OCI-LY7 (cell line): ENCODE measurements at regions of chr5 and their contacts with region 1.

Region 1: DNA sequence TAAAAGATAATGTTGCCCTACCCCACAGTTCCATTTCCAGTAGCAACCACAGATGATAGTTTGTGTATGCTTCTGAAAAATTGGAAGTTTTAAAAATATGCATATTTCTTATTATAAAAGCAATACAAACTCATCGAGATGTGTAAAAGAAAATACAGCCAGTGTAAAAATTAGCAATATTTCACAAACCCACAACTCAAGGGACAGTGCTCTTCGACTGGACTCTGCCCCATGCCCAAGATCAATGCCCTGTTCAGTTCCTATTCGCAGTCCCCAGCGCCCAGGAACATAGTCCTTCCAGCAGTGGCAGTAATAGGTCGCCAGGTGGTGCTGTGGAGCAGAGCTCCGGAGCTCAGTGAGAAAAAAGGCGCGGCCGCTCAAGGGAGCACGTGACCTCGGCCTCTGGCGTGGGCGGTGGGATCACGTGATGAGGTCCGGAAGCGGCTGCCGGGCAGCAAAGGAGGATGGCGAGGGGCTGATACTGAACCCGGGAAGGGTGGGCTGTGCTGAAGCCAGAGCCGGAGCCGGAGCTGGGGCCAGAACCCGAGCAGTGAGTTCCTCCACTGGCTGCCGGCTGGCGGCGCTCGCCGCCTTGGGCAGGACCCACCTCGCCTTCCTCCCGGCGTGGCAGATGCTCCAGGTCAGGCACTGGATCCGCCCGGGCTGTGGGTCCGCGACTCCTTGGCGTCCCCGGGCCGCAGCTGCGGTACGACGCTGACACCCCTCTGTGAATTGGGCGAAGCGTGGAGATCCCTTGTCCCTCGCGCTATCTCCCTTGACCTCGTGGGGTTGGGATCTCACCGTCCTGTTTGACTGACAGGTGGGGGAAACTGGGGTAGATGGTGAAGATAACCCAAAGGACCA is at the start of gene SLC36A1:
- DNase-seq: peak; percentile 96
- H3K4me3 ChIP-seq: peak within 1 kb of the TSS; percentile 86
- H3K27ac ChIP-seq: no peak within 1 kb of the TSS
- H3K4me1 ChIP-seq: peaks cover 7% of the 10 kb centered on the region
- CTCF ChIP-seq: peak; percentile 94
- total RNA-seq, gene SLC36A1: 6.7 and 11.6 TPM in 2 replicates

Region 2: DNA sequence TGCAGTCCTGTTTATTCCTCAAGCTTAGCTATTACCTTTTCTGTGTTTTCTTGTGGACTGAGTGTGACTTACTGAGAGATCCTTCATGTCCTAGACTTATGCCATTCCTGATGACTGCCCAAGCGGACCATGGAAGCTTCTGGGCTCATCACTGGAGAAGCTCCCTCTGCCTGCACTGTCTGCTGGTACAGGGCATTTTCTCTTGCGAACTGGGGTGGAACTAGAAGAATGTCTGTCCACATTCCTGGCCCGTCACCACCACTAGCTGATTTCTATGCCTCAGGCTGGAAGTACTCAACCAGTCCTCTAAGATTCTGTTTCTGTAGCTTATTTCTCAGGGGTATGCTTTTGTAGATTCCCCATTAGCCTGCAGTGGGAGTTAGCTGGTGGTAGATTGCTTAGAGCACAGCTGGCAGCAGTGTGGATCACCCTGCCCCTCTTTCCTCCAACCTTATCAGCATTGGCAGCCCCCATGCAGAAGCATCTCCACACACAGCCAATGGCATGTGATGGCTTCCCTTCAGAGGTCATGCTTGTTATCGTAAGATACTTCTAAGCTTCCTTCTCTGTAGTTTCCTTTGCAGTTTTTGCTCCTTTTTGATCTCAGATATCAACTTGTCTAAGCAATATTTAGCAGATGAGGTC is 12.4 kb after region 1 on chr5:
- CTCF ChIA-PET with region 1: interaction called, 3 read pairs
- POLR2A ChIA-PET with region 1: interaction called, 16 read pairs
- intact Hi-C with region 1: no loop called
- DNase-seq: no peak
- H3K4me3 ChIP-seq: no peak overlapping the region
- H3K27ac ChIP-seq: no peak overlapping the region
- H3K4me1 ChIP-seq: no peaks in the 10 kb centered on the region
- CTCF ChIP-seq: no peak

Region 3: GRCh38 chr5:151499501-151500035 is 52.2 kb after region 1 on chr5:
- CTCF ChIA-PET with region 1: no interaction called
- POLR2A ChIA-PET with region 1: no interaction called
- intact Hi-C with region 1: loop called (anchors 1 kb)
- DNase-seq: no peak
- H3K4me3 ChIP-seq: no peak overlapping the region
- H3K27ac ChIP-seq: no peak overlapping the region
- H3K4me1 ChIP-seq: no peaks in the 10 kb centered on the region
- CTCF ChIP-seq: no peak

Region 4: GRCh38 chr5:151523335-151523734 is 75.9 kb after region 1 on chr5:
- CTCF ChIA-PET with region 1: no interaction called
- POLR2A ChIA-PET with region 1: no interaction called
- intact Hi-C with region 1: loop called (anchors 1 kb)
- DNase-seq: peak; percentile 45
- H3K4me3 ChIP-seq: no peak overlapping the region
- H3K27ac ChIP-seq: no peak overlapping the region
- H3K4me1 ChIP-seq: no peaks in the 10 kb centered on the region
- CTCF ChIP-seq: peak; percentile 79

Region 5: GRCh38 chr5:151651997-151652645 is 204.7 kb after region 1 on chr5:
- CTCF ChIA-PET with region 1: interaction called, 6 read pairs
- POLR2A ChIA-PET with region 1: interaction called, 3 read pairs
- intact Hi-C with region 1: loop called (anchors 1 kb)
- DNase-seq: peak; percentile 73
- H3K4me3 ChIP-seq: no peak overlapping the region
- H3K27ac ChIP-seq: no peak overlapping the region
- H3K4me1 ChIP-seq: no peaks in the 10 kb centered on the region
- CTCF ChIP-seq: peak; percentile 87

Region 6: GRCh38 chr5:151740336-151740942 is 293.0 kb after region 1 on chr5:
- CTCF ChIA-PET with region 1: no interaction called
- POLR2A ChIA-PET with region 1: no interaction called
- intact Hi-C with region 1: loop called (anchors 2 kb)
- DNase-seq: peak; percentile 70
- H3K4me3 ChIP-seq: no peak overlapping the region
- H3K27ac ChIP-seq: no peak overlapping the region
- H3K4me1 ChIP-seq: no peaks in the 10 kb centered on the region
- CTCF ChIP-seq: peak; percentile 96